B cell (primary cell): ENCODE measurements at regions of chr9 and their contacts with region 1.

Region 1: GRCh38 chr9:20622330-20623020 is at the start of gene MLLT3:
- DNase-seq: peak; percentile 94
- ATAC-seq: peak; percentile 89
- H3K4me3 ChIP-seq: peak within 1 kb of the TSS; percentile 74 to 96 (median 91)
- H3K4me3 Mint-ChIP-seq: peak within 1 kb of the TSS; percentile 92
- H3K27ac ChIP-seq: peak within 1 kb of the TSS; percentile 25 to 40
- H3K27ac Mint-ChIP-seq: peak within 1 kb of the TSS; percentile 92
- H3K4me1 ChIP-seq: peaks cover 23 to 41% of the 10 kb centered on the region in 2 donors
- H3K4me1 Mint-ChIP-seq: peaks cover 38% of the 10 kb centered on the region
- H3K27me3 ChIP-seq: peaks cover 0 to 15% (median 6%) of the 10 kb centered on the region in 4 experiments
- H3K27me3 Mint-ChIP-seq: peaks cover 18% of the 10 kb centered on the region
- CTCF ChIP-seq: no peak
- total RNA-seq, gene MLLT3: 3.2 and 3.4 TPM in 2 replicates

Region 2: DNA sequence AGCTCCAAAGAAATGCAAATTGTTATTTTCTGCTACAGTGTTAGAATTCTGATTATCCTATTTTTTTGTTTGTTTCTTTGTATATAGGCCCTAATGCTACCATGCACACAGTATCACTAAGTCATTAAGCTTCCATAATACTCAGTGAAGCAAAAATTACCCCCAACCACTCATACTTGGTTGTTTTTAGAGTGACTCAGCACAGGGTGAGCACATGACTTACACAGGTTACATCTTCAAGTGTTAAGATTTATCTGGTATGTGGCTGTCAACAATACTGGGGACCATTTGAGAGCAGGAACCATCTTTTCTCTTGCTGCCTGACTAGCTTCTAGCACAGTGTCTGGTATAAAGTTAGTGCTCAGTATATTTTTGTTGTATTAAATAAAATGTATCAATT is 577.8 kb before region 1 on chr9:
- CTCF ChIA-PET with region 1: no interaction called
- POLR2A ChIA-PET with region 1: no interaction called
- intact Hi-C with region 1: loop called (anchors 5 kb)
- DNase-seq: no peak
- ATAC-seq: no peak
- H3K4me3 ChIP-seq: no peak overlapping the region
- H3K4me3 Mint-ChIP-seq: no peak overlapping the region
- H3K27ac ChIP-seq: no peak overlapping the region
- H3K27ac Mint-ChIP-seq: no peak overlapping the region
- H3K4me1 ChIP-seq: peaks cover 34 to 51% of the 10 kb centered on the region in 2 donors
- H3K4me1 Mint-ChIP-seq: peaks cover 42% of the 10 kb centered on the region
- H3K27me3 ChIP-seq: no peaks in the 10 kb centered on the region
- H3K27me3 Mint-ChIP-seq: no peaks in the 10 kb centered on the region
- CTCF ChIP-seq: no peak

Region 3: DNA sequence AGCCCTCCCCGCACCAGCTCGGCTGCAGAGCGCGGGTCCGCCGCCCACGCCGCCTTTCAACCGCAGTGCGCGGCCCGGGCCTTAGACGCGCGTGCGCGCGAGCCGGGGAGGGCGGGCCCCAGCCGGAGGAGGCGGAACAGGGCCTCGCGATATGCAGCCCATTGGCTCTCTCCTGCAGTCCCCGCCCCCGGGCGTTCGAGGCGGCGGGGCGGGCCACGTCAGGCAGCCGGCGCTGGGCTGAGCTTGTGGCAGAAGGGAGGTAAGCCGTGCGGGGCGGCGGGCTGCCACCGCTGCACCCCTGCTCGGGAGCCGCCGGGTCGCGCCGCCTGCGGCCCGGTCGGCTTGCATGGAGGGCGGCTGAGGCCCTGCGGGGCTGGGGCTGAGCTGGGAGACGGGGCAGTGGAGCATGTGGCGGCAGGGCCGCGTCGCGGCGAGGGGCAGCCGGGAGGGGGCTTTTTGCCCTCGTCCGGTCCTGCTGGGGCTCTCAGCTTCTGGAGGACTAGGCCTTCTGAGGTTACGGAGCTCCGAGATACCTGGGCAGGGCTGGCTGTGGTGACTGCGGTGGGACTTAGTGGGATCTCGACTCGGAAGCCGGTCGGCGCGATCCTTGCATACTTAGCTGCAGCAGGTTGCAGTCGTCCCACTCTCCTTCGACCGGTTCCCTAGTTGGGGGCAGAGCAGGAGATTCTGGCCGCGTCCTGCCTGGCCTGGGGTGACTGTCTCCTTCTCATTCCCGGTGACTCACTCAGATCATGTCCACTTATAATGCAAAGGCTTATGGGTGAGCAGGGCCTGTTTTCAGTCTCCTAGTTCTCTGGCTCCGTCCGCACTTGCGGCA is 61.8 kb after region 1 on chr9 and contains the start of gene FOCAD:
- CTCF ChIA-PET with region 1: interaction called, 8 read pairs
- POLR2A ChIA-PET with region 1: interaction called, 7 read pairs
- intact Hi-C with region 1: loop called (anchors 1 kb)
- DNase-seq: peak; percentile 96
- ATAC-seq: peak; percentile 99
- H3K4me3 ChIP-seq: peak within 1 kb of the TSS; percentile 71 to 92 (median 83)
- H3K4me3 Mint-ChIP-seq: peak within 1 kb of the TSS; percentile 95
- H3K27ac ChIP-seq: peak within 1 kb of the TSS; percentile 20 to 70
- H3K27ac Mint-ChIP-seq: peak within 1 kb of the TSS; percentile 48
- H3K4me1 ChIP-seq: peaks cover 15 to 17% of the 10 kb centered on the region in 2 donors
- H3K4me1 Mint-ChIP-seq: peaks cover 17% of the 10 kb centered on the region
- H3K27me3 ChIP-seq: no peaks in the 10 kb centered on the region
- H3K27me3 Mint-ChIP-seq: no peaks in the 10 kb centered on the region
- CTCF ChIP-seq: no peak
- total RNA-seq, gene FOCAD: 10.1 and 13.8 TPM in 2 replicates

Region 4: DNA sequence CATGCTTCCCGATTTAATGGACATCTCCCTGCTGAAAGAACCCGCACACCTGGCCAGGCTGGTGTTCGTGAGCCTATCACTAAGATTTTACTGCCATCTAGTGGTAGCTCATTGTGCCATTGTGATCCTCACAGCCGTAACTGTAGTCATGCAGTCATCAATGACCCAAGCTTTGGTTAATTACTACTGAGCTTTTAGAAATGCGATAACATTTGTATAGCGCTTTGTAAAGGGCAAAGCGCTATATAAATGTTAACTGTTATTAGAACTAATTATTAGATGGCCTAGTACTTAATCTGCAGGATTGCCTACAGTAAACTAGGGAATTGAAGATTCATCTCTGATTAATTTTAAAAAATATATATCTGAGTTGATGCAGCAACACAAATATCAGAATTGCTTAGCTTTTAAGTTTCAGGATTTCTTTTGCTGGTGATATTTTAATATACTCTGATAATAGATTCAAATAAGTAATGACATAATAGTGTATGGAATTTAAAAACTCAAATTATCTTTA is 318.8 kb after region 1 on chr9:
- CTCF ChIA-PET with region 1: interaction called, 79 read pairs
- POLR2A ChIA-PET with region 1: no interaction called
- intact Hi-C with region 1: loop called (anchors 1 kb)
- DNase-seq: peak; percentile 78
- ATAC-seq: peak; percentile 77
- H3K4me3 ChIP-seq: no peak overlapping the region
- H3K4me3 Mint-ChIP-seq: no peak overlapping the region
- H3K27ac ChIP-seq: no peak overlapping the region
- H3K27ac Mint-ChIP-seq: no peak overlapping the region
- H3K4me1 ChIP-seq: no peaks in the 10 kb centered on the region
- H3K4me1 Mint-ChIP-seq: peaks cover 3% of the 10 kb centered on the region
- H3K27me3 ChIP-seq: no peaks in the 10 kb centered on the region
- H3K27me3 Mint-ChIP-seq: no peaks in the 10 kb centered on the region
- CTCF ChIP-seq: peak; percentile 88

Region 5: DNA sequence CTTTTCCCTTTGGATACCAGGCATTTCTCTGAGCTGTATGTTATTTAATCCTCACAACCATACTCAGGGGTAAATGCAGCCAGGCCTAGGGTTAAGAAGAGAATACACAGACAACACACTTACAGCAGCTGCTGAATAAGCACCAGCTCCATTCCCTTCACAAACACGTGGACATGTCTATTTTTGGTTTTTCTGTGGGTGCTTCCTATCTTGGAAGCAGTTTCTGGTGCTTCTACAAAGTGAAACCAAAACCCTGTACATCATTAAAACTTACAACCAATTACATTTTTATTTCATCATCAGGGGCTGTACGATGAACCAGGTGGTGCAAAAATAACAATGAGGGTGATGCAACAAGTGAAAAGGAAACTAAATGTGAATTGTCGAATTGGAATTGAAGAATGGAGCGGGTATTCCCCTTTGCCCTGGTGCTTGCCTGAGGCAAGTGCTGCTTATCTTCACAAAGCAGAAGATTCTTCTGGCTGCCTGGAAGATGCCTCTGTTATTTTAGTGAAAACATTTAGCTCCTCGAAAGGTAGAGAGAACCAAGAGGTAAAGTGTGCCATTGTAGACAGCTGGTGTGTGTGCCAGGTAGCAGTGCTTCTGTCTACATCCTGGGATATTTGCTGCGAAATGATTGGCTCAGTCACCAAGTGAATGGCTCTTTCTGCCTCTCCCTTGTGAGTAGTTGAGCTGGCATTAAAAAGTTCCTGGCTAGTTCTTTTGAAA is 473.9 kb after region 1 on chr9:
- CTCF ChIA-PET with region 1: no interaction called
- POLR2A ChIA-PET with region 1: no interaction called
- intact Hi-C with region 1: loop called (anchors 5 kb)
- DNase-seq: peak; percentile 60
- ATAC-seq: peak; percentile 39
- H3K4me3 ChIP-seq: peak overlapping the region in 1 of 5 experiments; percentile 17
- H3K4me3 Mint-ChIP-seq: peak overlapping the region; percentile 50
- H3K27ac ChIP-seq: peak overlapping the region in 1 of 2 donors; percentile 57
- H3K27ac Mint-ChIP-seq: no peak overlapping the region
- H3K4me1 ChIP-seq: peaks cover 20 to 23% of the 10 kb centered on the region in 2 donors
- H3K4me1 Mint-ChIP-seq: peaks cover 35% of the 10 kb centered on the region
- H3K27me3 ChIP-seq: no peaks in the 10 kb centered on the region
- H3K27me3 Mint-ChIP-seq: no peaks in the 10 kb centered on the region
- CTCF ChIP-seq: no peak

Region 6: DNA sequence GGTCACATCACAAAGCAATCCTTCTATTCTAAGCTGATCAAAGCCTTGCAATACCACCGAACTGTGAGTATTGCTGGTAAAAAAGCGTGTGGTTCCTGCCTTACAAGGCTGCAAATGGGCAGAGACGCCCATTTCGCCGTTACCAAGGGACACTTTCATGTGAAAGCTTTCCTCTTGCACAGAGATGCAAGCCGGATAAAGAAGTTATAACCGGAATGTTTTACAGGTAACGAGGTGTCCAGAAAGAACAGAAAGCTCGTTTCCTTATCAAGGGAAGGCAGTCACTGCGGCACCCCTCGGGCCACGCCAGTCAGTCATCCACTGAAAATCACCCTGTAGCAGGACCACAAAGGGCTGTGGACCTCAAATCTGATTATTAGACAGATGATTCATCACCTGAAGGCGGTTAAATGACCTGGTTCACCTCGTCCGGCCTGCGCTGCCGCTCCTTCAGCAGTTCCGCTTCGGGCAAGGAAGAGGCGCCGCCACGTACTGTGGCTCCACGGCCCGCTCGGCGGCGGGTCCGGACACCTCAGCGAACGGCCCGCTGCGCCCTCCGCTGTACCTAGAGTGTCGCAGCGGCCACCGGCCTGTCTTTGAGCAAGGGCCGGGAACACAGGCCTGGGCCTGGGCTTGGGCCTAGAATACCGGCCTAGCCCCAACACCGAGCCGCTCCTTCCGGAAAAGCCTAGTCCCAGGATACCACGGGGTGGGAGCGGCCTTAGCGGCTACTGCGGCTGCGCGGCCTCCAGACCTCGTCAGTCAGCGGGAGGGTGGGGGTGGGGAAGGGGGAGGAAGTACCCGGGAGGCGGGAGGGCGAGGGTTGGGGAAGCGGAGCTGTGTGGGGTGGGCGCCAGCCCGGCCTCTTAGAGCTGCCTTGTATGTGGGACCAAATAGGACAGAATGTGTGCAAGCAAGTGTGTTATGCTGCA is 712.5 kb after region 1 on chr9 and contains the start of gene KLHL9:
- CTCF ChIA-PET with region 1: interaction called, 3 read pairs
- POLR2A ChIA-PET with region 1: interaction called, 6 read pairs
- intact Hi-C with region 1: loop called (anchors 5 kb)
- DNase-seq: peak; percentile 93
- ATAC-seq: peak; percentile 89
- H3K4me3 ChIP-seq: peak within 1 kb of the TSS; percentile 83 to 97 (median 89)
- H3K4me3 Mint-ChIP-seq: peak within 1 kb of the TSS; percentile 95
- H3K27ac ChIP-seq: peak within 1 kb of the TSS; percentile 90
- H3K27ac Mint-ChIP-seq: peak within 1 kb of the TSS; percentile 92
- H3K4me1 ChIP-seq: peaks cover 18 to 27% of the 10 kb centered on the region in 2 donors
- H3K4me1 Mint-ChIP-seq: peaks cover 49% of the 10 kb centered on the region
- H3K27me3 ChIP-seq: peaks cover 0 to 6% (median under 1%) of the 10 kb centered on the region in 4 experiments
- H3K27me3 Mint-ChIP-seq: peaks cover 12% of the 10 kb centered on the region
- CTCF ChIP-seq: no peak
- total RNA-seq, gene KLHL9: 17.5 and 17.6 TPM in 2 replicates